IMR-90 (cell line): ENCODE measurements at regions of chr18 and their contacts with region 1.

Region 1: GRCh38 chr18:2932247-2933181 is 80.4 kb downstream of the LPIN2 start:
- DNase-seq: peak; percentile 70
- ATAC-seq: peak; percentile 56
- H3K4me3 ChIP-seq: no peak overlapping the region
- H3K27ac ChIP-seq: peak overlapping the region; percentile 39; the same call in 1 of the 2 replicates
- H3K4me1 ChIP-seq: peaks cover 14% of the 10 kb centered on the region
- H3K27me3 ChIP-seq: no peaks in the 10 kb centered on the region
- CTCF ChIP-seq: peak; percentile 82
- POLR2A ChIP-seq: no peak
- RAD21 ChIP-seq: peak; percentile 84

Region 2: GRCh38 chr18:2985628-2986027 is 53.1 kb after region 1 on chr18:
- CTCF ChIA-PET with region 1: no interaction called
- POLR2A ChIA-PET with region 1: no interaction called
- dilution Hi-C with region 1: no loop called
- in situ Hi-C with region 1: no loop called
- intact Hi-C with region 1: loop called (anchors 5 kb)
- DNase-seq: peak; percentile 54
- ATAC-seq: no peak
- H3K4me3 ChIP-seq: no peak overlapping the region
- H3K27ac ChIP-seq: peak overlapping the region; percentile 27; the same call in 1 of the 2 replicates
- H3K4me1 ChIP-seq: peaks cover 30% of the 10 kb centered on the region
- H3K27me3 ChIP-seq: no peaks in the 10 kb centered on the region
- CTCF ChIP-seq: peak; percentile 51
- POLR2A ChIP-seq: no peak
- RAD21 ChIP-seq: peak; percentile 48

Region 3: DNA sequence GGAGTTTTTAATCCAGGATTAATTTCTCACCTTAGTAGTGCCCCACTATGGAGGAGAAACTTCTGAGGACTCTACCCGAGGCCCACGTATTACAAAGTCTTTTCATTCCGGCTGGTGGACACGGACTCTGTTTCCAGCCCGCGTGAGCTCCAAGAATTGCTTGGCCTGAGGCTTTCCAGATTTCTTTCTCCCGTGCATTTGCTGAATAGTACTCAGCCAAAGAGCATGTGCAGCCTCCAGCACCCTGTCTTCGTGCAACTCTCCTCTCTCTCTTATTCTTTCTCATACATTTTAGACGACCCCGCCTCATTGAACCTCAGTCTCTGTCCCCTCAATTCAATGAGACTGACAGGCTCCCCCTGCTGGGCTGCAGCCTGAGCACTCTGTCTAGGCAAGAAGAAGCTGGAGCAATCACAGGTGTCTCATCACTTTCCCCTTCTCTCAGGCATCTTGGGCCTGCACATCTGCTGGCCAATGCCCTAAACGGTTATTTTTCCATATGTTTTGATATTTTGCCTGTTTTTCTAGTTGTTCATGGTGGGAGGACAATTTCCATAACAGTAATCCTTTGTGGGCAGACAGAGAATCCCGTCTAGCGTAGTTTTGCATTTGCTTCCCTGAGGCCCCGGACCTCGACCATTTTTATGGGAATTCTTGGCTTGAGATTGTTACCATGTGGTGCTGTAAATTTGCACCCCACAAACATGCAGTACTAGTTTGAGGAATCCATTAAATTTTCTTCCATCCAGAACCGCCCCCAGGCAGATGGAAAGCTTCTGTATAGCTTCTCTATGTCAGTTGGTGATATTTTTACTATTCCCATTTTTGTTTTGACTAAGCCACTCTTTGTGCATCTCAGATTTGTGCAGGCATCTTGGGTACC is 130.5 kb after region 1 on chr18:
- CTCF ChIA-PET with region 1: no interaction called
- POLR2A ChIA-PET with region 1: no interaction called
- dilution Hi-C with region 1: no loop called
- in situ Hi-C with region 1: no loop called
- intact Hi-C with region 1: loop called (anchors 1 kb)
- DNase-seq: peak; percentile 15
- ATAC-seq: peak; percentile 70
- H3K4me3 ChIP-seq: no peak overlapping the region
- H3K27ac ChIP-seq: no peak overlapping the region
- H3K4me1 ChIP-seq: peaks cover 7% of the 10 kb centered on the region; the same call in 1 of the 2 replicates
- H3K27me3 ChIP-seq: no peaks in the 10 kb centered on the region
- CTCF ChIP-seq: peak; percentile 53
- POLR2A ChIP-seq: no peak
- RAD21 ChIP-seq: peak; percentile 46

Region 4: DNA sequence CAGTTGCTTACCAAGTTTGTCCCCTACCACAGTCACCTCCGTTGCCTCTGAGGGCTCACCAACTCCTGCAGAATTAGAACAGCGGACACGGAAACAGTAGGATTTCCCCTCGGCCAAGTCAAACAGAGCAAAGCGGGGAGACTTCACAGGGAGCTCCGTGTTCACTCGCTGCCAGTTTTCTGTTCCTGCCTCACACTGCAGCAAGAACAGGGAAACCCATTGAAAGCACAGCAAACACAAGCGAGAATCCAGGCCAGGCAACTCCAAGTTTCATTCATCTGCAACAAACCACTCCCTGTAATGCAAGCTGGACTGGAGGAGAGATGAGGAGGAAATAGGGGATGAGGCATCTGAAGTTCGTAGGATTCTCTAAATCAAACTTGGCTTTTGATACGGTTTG is 203.0 kb after region 1 on chr18:
- CTCF ChIA-PET with region 1: no interaction called
- POLR2A ChIA-PET with region 1: no interaction called
- dilution Hi-C with region 1: no loop called
- in situ Hi-C with region 1: loop called (anchors 10 kb)
- intact Hi-C with region 1: no loop called
- DNase-seq: no peak
- ATAC-seq: no peak
- H3K4me3 ChIP-seq: no peak overlapping the region
- H3K27ac ChIP-seq: no peak overlapping the region
- H3K4me1 ChIP-seq: no peaks in the 10 kb centered on the region
- H3K27me3 ChIP-seq: peaks cover 8% of the 10 kb centered on the region; the same call in 1 of the 2 replicates
- CTCF ChIP-seq: no peak
- POLR2A ChIP-seq: no peak
- RAD21 ChIP-seq: no peak

Region 5: GRCh38 chr18:3245853-3246634 is 313.5 kb after region 1 on chr18:
- CTCF ChIA-PET with region 1: interaction called, 3 read pairs
- POLR2A ChIA-PET with region 1: no interaction called
- dilution Hi-C with region 1: no loop called
- in situ Hi-C with region 1: loop called (anchors 5 kb)
- intact Hi-C with region 1: loop called (anchors 1 kb)
- DNase-seq: peak; percentile 82
- ATAC-seq: peak; percentile 59
- H3K4me3 ChIP-seq: no peak overlapping the region
- H3K27ac ChIP-seq: peak overlapping the region; percentile 97; the same call in 1 of the 2 replicates
- H3K4me1 ChIP-seq: peaks cover 6% of the 10 kb centered on the region; the same call in 1 of the 2 replicates
- H3K27me3 ChIP-seq: no peaks in the 10 kb centered on the region
- CTCF ChIP-seq: peak; percentile 89
- POLR2A ChIP-seq: peak; percentile 45; the same call in 1 of the 2 replicates
- RAD21 ChIP-seq: peak; percentile 95